ENCODE measurements at regions of chr3 and their contacts with region 1.

Region 1: GRCh38 chr3:44976002-44976815 is at the starts of genes EXOSC7 and ZDHHC3:
- DNase-seq: peak; percentile 24 to 92
- H3K4me3 ChIP-seq: peak within 1 kb of the TSS; percentile 77 to 84
- H3K27ac ChIP-seq: peak within 1 kb of the TSS; percentile 60 to 80
- H3K4me1 ChIP-seq: peaks cover 12 to 16% of the 10 kb centered on the region in 2 donors
- H3K27me3 ChIP-seq: no peaks in the 10 kb centered on the region
- CTCF ChIP-seq: no peak
- total RNA-seq, gene EXOSC7: 51.2 TPM
- total RNA-seq, gene ZDHHC3: 67.8 TPM

Region 2: GRCh38 chr3:44861412-44862220 is 114.6 kb before region 1 on chr3 and contains the start of gene TMEM42:
- intact Hi-C with region 1: loop called (anchors 2 kb)
- DNase-seq: peak; percentile 55 to 95
- H3K4me3 ChIP-seq: peak within 1 kb of the TSS; percentile 67 to 89
- H3K27ac ChIP-seq: peak within 1 kb of the TSS; percentile 91 to 96
- H3K4me1 ChIP-seq: peaks cover 0 to 11% of the 10 kb centered on the region in 2 donors
- H3K27me3 ChIP-seq: no peaks in the 10 kb centered on the region
- CTCF ChIP-seq: peak in 2 of 3 experiments; percentile 4 to 40
- total RNA-seq, gene TMEM42: not detected

Region 3: DNA sequence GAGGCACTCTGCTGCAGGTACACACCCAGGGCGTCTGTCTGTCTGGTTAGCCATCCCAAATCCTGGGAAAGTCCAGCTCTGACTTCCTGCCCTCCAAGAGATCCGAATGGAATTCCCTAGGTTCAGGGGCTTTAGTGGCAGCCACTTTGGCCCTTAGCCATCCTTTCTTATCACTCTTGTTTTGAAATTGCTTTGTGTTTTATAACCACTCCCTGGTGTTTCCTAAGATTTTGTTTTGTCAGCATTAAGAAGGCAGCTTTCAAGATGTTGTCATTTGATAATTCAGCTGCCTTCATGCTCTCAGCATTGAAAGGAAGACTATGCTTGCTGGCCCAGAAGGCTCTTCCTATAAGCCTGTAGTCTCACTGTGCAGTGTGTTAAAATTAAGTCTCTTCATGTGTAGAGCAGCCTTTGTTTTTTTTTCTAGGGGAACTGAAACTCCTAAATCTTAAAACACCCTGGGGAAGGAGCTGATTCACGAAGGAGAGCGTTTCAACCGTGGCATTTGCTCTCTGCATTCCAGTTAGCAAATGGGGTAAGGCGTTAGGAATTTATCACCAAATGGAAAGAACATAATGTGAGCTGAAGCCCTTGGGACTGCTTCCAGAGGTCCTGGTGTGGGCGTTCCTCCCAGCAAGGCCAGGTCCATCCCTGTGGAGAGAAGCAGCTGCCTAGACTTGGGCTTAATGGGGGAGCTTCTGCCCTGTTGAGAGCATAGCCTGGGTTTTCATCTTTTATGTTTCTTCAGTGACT is 35.7 kb after region 1 on chr3:
- intact Hi-C with region 1: loop called (anchors 5 kb)
- DNase-seq: peak in 1 of 2 donors; percentile 89
- H3K4me3 ChIP-seq: peak overlapping the region; percentile 3 to 38
- H3K27ac ChIP-seq: peak overlapping the region; percentile 72 to 90
- H3K4me1 ChIP-seq: peaks cover 9 to 25% of the 10 kb centered on the region in 2 donors
- H3K27me3 ChIP-seq: no peaks in the 10 kb centered on the region
- CTCF ChIP-seq: no peak

Region 4: DNA sequence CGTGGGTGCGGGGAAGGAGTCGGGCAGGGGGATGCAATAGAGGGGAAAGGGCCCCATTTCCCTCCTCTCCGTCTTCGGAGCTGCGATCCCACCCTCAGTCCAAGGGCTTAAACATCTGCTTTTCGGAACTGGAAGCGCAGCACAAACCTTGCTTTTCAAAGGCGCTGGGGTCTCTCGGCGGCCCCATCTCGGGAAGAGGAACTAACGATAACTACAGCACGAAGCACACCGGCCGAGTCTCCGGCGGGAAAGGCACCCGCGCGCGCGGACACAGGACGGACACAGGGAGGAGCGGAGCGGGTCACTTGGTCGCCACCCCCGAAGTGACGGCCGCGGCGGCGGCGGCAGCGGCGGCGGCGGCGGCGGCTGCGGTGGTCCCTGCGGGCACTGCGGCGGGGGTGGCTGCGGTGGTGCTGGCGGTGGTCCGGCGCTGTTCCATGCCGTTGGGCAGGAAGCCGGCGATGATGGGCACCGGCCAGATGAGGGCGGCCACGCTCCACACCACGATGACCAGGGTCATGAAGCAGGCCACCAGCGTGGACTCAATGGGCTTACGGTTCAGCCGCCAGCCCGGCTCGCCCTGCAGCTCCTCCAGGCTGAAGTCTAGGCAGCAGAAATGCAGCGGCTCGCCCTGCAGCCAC is 248.7 kb after region 1 on chr3:
- intact Hi-C with region 1: no loop called
- DNase-seq: peak in 1 of 2 donors; percentile 78
- H3K4me3 ChIP-seq: peak overlapping the region; percentile 64 to 86
- H3K27ac ChIP-seq: no peak overlapping the region
- H3K4me1 ChIP-seq: peaks cover 2 to 7% of the 10 kb centered on the region in 2 donors
- H3K27me3 ChIP-seq: no peaks in the 10 kb centered on the region
- CTCF ChIP-seq: peak; percentile 21 to 58 (median 35)

Region 5: DNA sequence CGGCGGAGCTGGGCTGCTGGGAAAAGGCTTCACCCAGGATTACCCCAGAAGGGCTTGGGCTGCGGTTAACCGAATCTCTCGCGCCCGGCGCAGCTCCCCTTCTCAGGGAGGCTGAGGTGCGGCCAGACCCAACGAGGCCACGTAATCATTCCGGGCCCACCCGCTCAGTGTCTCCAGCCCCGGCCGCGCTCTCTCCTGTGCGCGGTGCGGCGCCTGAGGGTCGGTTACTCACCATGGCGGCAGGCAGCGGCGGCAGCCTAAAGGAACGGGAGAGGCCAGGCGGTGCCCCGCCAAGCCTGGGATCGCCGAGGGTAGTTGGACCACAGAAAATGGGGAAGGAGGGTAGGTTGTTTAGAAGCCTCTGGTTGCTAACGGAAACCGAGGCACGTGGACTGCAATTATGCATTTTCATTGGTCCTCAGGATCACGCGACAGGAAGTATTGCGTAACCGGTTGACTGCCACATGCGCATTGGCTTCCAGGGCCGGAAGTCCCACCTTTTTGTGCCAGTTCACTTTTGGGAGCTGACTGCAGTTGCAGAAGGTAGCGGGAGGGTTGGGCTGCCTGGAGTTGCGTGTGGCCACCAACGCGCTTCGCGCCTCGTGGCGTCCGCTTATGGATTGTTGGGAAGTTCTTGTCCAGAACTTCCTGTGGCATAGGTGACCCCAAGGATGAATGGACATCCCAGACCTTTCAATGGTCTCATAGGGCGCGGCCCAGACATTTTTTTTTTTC is 865.7 kb after region 1 on chr3 and contains the start of gene LZTFL1:
- intact Hi-C with region 1: loop called (anchors 10 kb)
- DNase-seq: peak; percentile 78 to 96
- H3K4me3 ChIP-seq: peak within 1 kb of the TSS; percentile 72 to 79
- H3K27ac ChIP-seq: peak within 1 kb of the TSS in 1 of 2 donors; percentile 16
- H3K4me1 ChIP-seq: no peaks in the 10 kb centered on the region
- H3K27me3 ChIP-seq: no peaks in the 10 kb centered on the region
- CTCF ChIP-seq: no peak
- total RNA-seq, gene LZTFL1: 6.7 TPM

Measured in ascending aorta (tissue), 2 donors.